ENCODE measurements at regions of chr17 and their contacts with region 1.

Region 1: GRCh38 chr17:80254396-80255251 is 6.0 kb upstream of the RNF213 start:
- DNase-seq: peak; percentile 52 to 79 (median 58)
- H3K4me3 ChIP-seq: no peak overlapping the region
- H3K4me3 Mint-ChIP-seq: peak overlapping the region; percentile 6 to 79 (median 51)
- H3K27ac ChIP-seq: peak overlapping the region; percentile 29
- H3K27ac Mint-ChIP-seq: peak overlapping the region; percentile 86 to 94 (median 90)
- H3K4me1 ChIP-seq: peaks cover 43% of the 10 kb centered on the region
- H3K4me1 Mint-ChIP-seq: peaks cover 27 to 58% (median 41%) of the 10 kb centered on the region in 4 donors
- H3K27me3 ChIP-seq: no peaks in the 10 kb centered on the region
- H3K27me3 Mint-ChIP-seq: no peaks in the 10 kb centered on the region

Region 2: DNA sequence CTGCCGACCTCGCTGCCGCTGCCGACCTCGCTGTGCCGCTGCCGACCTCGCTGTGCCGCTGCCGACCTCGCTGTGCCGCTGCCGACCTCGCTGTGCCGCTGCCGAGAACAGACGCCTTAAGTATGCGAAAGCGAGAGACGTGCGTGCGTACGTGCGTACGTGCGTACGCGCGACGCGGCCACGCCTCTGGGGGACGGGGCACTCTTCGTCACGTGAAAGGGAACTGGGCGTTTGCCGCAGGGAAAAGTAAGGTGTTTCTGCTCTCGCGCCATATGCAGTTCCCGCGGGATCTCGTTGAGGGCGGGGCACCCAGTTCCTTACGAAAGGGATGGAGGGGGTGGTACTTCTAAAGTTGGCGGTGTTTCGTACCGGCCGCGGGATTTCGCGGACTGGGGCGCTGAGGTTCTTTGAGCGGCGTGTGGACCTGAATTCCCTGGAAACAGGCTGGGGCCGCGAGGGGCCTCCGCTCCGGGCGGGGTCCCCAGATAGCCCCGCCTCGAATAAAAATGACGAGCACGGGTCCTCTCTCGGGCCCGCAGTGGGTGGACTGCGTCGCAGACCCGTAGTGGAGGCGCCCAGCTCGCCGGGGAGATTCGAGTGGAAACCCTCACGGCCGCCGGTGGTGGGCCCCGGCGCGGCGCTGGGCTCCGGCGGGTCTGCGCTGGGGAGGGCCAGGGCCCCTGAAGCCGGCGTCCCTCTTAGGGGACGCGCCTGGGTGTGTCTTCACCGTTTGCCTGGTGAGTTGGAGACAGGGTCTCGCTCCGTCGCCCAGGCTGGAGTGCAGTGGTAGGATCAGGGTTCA is 107.4 kb before region 1 on chr17 and contains the start of gene EIF4A3:
- CTCF ChIA-PET with region 1: no interaction called
- POLR2A ChIA-PET with region 1: interaction called, 3 read pairs
- intact Hi-C with region 1: loop called (anchors 2 kb)
- DNase-seq: peak; percentile 95 to 99 (median 97)
- H3K4me3 ChIP-seq: peak within 1 kb of the TSS; percentile 48 to 94
- H3K4me3 Mint-ChIP-seq: peak within 1 kb of the TSS; percentile 93 to 99 (median 98)
- H3K27ac ChIP-seq: peak within 1 kb of the TSS; percentile 83
- H3K27ac Mint-ChIP-seq: peak within 1 kb of the TSS; percentile 90 to 99 (median 98)
- H3K4me1 ChIP-seq: peaks cover 36% of the 10 kb centered on the region
- H3K4me1 Mint-ChIP-seq: peaks cover 23 to 54% (median 35%) of the 10 kb centered on the region in 4 donors
- H3K27me3 ChIP-seq: no peaks in the 10 kb centered on the region
- H3K27me3 Mint-ChIP-seq: no peaks in the 10 kb centered on the region
- total RNA-seq, gene EIF4A3: 54.2 to 56.0 TPM

Region 3: GRCh38 chr17:80426681-80427326 is 172.2 kb after region 1 on chr17:
- CTCF ChIA-PET with region 1: no interaction called
- POLR2A ChIA-PET with region 1: no interaction called
- intact Hi-C with region 1: no loop called
- DNase-seq: peak; percentile 83 to 87 (median 86)
- H3K4me3 ChIP-seq: no peak overlapping the region
- H3K4me3 Mint-ChIP-seq: no peak overlapping the region
- H3K27ac ChIP-seq: no peak overlapping the region
- H3K27ac Mint-ChIP-seq: peak overlapping the region in 4 of 7 donors; percentile 47 to 80 (median 68)
- H3K4me1 ChIP-seq: peaks cover 13% of the 10 kb centered on the region
- H3K4me1 Mint-ChIP-seq: peaks cover 4 to 13% (median 9%) of the 10 kb centered on the region in 4 donors
- H3K27me3 ChIP-seq: no peaks in the 10 kb centered on the region
- H3K27me3 Mint-ChIP-seq: no peaks in the 10 kb centered on the region